PC-9 (cell line): ENCODE measurements at regions of chr3 and their contacts with region 1.

Region 1: GRCh38 chr3:194841066-194841841 is 155.6 kb downstream of the FAM43A start:
- DNase-seq: peak; percentile 75 to 81
- H3K4me3 ChIP-seq: peak overlapping the region; percentile 32; the same call in 1 of the 2 replicates
- H3K27ac ChIP-seq: peak overlapping the region; percentile 7; the same call in 1 of the 2 replicates
- H3K4me1 ChIP-seq: peaks cover 13% of the 10 kb centered on the region
- H3K27me3 ChIP-seq: no peaks in the 10 kb centered on the region
- CTCF ChIP-seq: no peak

Region 2: GRCh38 chr3:194604834-194605233 is 236.4 kb before region 1 on chr3:
- CTCF ChIA-PET with region 1: no interaction called
- POLR2A ChIA-PET with region 1: no interaction called
- intact Hi-C with region 1: no loop called
- DNase-seq: no peak
- H3K4me3 ChIP-seq: no peak overlapping the region
- H3K27ac ChIP-seq: no peak overlapping the region
- H3K4me1 ChIP-seq: no peaks in the 10 kb centered on the region
- H3K27me3 ChIP-seq: no peaks in the 10 kb centered on the region
- CTCF ChIP-seq: peak; percentile 83

Region 3: DNA sequence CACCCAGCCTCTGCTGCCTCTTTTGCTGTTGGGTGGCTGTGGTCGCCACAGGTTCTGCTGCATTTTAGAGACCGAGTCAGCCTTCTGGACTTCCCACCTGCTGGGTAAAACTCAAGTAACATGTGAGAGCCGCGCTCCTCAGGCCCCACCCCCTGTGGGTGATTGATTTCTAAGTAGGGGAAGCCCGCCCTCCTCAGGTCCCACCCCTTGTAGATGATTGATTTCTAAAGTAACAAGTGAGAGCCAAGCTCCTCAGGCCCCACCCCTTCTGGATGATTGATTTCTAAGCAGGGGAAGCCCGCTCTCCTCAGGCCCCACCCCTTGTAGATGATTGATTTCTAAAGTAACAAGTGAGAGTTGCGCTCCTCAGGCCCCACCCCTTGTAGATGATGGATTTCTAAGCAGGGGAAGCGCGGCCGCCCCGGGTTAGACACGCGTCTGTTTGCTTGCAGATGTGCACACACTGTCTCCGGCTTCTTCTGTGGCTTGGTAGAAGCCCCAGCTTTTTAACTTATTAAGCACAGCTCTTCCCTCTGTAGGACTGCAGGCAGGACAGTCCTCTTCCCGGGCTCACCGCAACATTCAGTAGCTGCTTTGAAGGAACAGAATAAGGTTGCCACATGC is 72.1 kb before region 1 on chr3:
- CTCF ChIA-PET with region 1: no interaction called
- POLR2A ChIA-PET with region 1: no interaction called
- intact Hi-C with region 1: loop called (anchors 5 kb)
- DNase-seq: peak; percentile 96 to 97
- H3K4me3 ChIP-seq: peak overlapping the region; percentile 50; the same call in 1 of the 2 replicates
- H3K27ac ChIP-seq: no peak overlapping the region
- H3K4me1 ChIP-seq: peaks cover 26% of the 10 kb centered on the region
- H3K27me3 ChIP-seq: no peaks in the 10 kb centered on the region
- CTCF ChIP-seq: 0 out of 2 replicates have a peak, but pooled peaks have one; percentile 28